ENCODE measurements at regions of chr9 and their contacts with region 1.

Region 1: GRCh38 chr9:120936011-120936763 is 9.6 kb upstream of the TRAF1 start:
- DNase-seq: peak; percentile 86 to 93
- ATAC-seq: peak; percentile 75 to 87 (median 78)
- H3K4me3 ChIP-seq: no peak overlapping the region
- H3K4me3 Mint-ChIP-seq: peak overlapping the region; percentile 64
- H3K27ac ChIP-seq: peak overlapping the region; percentile 7
- H3K27ac Mint-ChIP-seq: peak overlapping the region; percentile 68 to 72
- H3K4me1 ChIP-seq: peaks cover 49% of the 10 kb centered on the region
- H3K4me1 Mint-ChIP-seq: peaks cover 33 to 44% of the 10 kb centered on the region in 2 donors
- H3K27me3 ChIP-seq: no peaks in the 10 kb centered on the region
- H3K27me3 Mint-ChIP-seq: peaks cover 0 to 5% of the 10 kb centered on the region in 2 donors
- CTCF ChIP-seq: peak; percentile 96

Region 2: GRCh38 chr9:120619751-120620655 is 316.2 kb before region 1 on chr9:
- intact Hi-C with region 1: loop called (anchors 1 kb)
- DNase-seq: peak; percentile 34 to 80
- ATAC-seq: peak; percentile 88 to 95 (median 93)
- H3K4me3 ChIP-seq: no peak overlapping the region
- H3K4me3 Mint-ChIP-seq: no peak overlapping the region
- H3K27ac ChIP-seq: no peak overlapping the region
- H3K27ac Mint-ChIP-seq: peak overlapping the region in 1 of 2 donors; percentile 5
- H3K4me1 ChIP-seq: no peaks in the 10 kb centered on the region
- H3K4me1 Mint-ChIP-seq: peaks cover 8 to 12% of the 10 kb centered on the region in 2 donors
- H3K27me3 ChIP-seq: no peaks in the 10 kb centered on the region
- H3K27me3 Mint-ChIP-seq: no peaks in the 10 kb centered on the region
- CTCF ChIP-seq: peak; percentile 88

Region 3: DNA sequence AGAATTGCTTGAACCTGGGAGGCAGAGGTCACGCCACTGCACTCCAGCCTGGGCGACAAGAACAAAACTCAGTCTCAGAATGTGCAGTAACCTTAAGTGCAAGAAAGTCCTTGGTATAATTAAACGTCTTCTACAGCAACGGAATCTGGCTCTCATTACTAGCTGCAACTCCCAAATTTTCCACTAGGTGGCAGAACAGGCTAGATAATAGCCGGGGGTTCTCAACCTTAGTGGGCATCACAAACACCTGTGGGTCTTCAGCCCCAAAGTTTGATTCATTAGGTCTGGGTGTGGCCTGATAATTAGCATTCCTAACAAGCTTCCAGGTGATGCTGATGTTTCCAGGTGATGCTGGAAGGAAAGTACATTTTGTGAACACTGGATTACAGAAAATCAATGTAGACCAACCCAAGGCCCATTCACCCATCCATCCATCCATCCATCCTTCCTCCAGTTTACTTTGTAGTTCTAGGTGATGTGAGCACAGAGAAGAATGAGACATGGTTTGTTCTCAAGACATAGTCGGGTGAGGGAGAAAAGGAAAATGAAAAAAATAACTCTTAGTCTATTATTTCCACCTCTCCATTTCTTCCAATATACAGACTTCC is 180.3 kb before region 1 on chr9:
- intact Hi-C with region 1: loop called (anchors 1 kb)
- DNase-seq: peak; percentile 51 to 85
- ATAC-seq: peak; percentile 69 to 85 (median 74)
- H3K4me3 ChIP-seq: no peak overlapping the region
- H3K4me3 Mint-ChIP-seq: no peak overlapping the region
- H3K27ac ChIP-seq: no peak overlapping the region
- H3K27ac Mint-ChIP-seq: peak overlapping the region in 1 of 2 donors; percentile 36
- H3K4me1 ChIP-seq: no peaks in the 10 kb centered on the region
- H3K4me1 Mint-ChIP-seq: peaks cover 0 to 5% of the 10 kb centered on the region in 2 donors
- H3K27me3 ChIP-seq: no peaks in the 10 kb centered on the region
- H3K27me3 Mint-ChIP-seq: no peaks in the 10 kb centered on the region
- CTCF ChIP-seq: peak; percentile 93

Region 4: GRCh38 chr9:120792898-120793765 is 143.1 kb before region 1 on chr9 and contains the start of gene FBXW2:
- intact Hi-C with region 1: loop called (anchors 5 kb)
- DNase-seq: peak; percentile 75 to 92
- ATAC-seq: peak; percentile 85 to 92 (median 87)
- H3K4me3 ChIP-seq: peak within 1 kb of the TSS; percentile 76
- H3K4me3 Mint-ChIP-seq: peak within 1 kb of the TSS; percentile 94
- H3K27ac ChIP-seq: peak within 1 kb of the TSS; percentile 78
- H3K27ac Mint-ChIP-seq: peak within 1 kb of the TSS; percentile 87 to 96
- H3K4me1 ChIP-seq: peaks cover 15% of the 10 kb centered on the region
- H3K4me1 Mint-ChIP-seq: peaks cover 51 to 52% of the 10 kb centered on the region in 2 donors
- H3K27me3 ChIP-seq: no peaks in the 10 kb centered on the region
- H3K27me3 Mint-ChIP-seq: no peaks in the 10 kb centered on the region
- CTCF ChIP-seq: no peak
- total RNA-seq, gene FBXW2: 88.3 to 122 (median 92.6) TPM

Region 5: GRCh38 chr9:120842690-120843499 is 93.3 kb before region 1 on chr9 and contains the start of gene PSMD5:
- intact Hi-C with region 1: no loop called
- DNase-seq: peak; percentile 92 to 98
- ATAC-seq: peak; percentile 95 to 99 (median 97)
- H3K4me3 ChIP-seq: peak within 1 kb of the TSS; percentile 85
- H3K4me3 Mint-ChIP-seq: peak within 1 kb of the TSS; percentile 99
- H3K27ac ChIP-seq: peak within 1 kb of the TSS; percentile 92
- H3K27ac Mint-ChIP-seq: peak within 1 kb of the TSS; percentile 98 to 99
- H3K4me1 ChIP-seq: peaks cover 28% of the 10 kb centered on the region
- H3K4me1 Mint-ChIP-seq: peaks cover 57 to 58% of the 10 kb centered on the region in 2 donors
- H3K27me3 ChIP-seq: no peaks in the 10 kb centered on the region
- H3K27me3 Mint-ChIP-seq: no peaks in the 10 kb centered on the region
- CTCF ChIP-seq: no peak
- total RNA-seq, gene PSMD5: 24.6 to 41.2 (median 37.1) TPM

Region 6: DNA sequence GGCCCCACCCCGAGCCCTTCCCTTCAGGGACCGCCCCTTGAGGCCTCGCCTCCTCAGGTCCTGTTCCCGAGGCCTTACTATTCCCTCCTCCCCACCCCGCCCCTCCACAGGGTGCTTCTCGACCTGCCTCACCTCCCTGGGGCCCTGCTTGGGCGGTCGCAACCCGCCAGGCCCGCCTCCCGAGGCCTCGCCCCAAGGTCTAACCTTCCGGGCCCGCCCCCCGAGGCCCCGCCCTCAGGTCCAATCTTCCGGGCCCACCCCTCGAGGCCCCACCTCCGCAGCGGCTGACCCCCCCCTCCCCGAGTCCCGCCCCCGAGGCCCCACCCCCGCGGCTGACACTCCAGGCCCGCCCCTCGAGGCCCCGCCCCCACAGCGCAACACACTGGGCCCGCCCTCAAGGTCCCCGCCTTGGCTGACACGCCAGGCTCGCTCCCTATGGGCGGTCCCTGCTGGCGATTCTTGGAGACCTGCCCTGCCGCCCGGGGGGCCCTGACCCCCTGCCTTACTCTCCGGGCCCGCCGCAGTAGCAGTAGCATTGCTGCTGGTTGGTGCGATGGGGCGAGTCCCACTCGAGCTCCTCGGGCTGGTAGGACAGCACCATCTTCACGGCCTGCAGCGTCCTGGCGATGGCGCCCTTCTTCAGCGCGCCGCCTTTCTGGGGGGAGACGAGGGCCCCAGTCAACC is 67.4 kb before region 1 on chr9:
- intact Hi-C with region 1: loop called (anchors 1 kb)
- DNase-seq: peak; percentile 93 to 96
- ATAC-seq: peak; percentile 81 to 93 (median 83)
- H3K4me3 ChIP-seq: peak overlapping the region; percentile 68
- H3K4me3 Mint-ChIP-seq: peak overlapping the region; percentile 94
- H3K27ac ChIP-seq: peak overlapping the region; percentile 78
- H3K27ac Mint-ChIP-seq: peak overlapping the region; percentile 92 to 94
- H3K4me1 ChIP-seq: peaks cover 16% of the 10 kb centered on the region
- H3K4me1 Mint-ChIP-seq: peaks cover 4 to 22% of the 10 kb centered on the region in 2 donors
- H3K27me3 ChIP-seq: no peaks in the 10 kb centered on the region
- H3K27me3 Mint-ChIP-seq: no peaks in the 10 kb centered on the region
- CTCF ChIP-seq: peak; percentile 57

Region 7: GRCh38 chr9:120877276-120878034 is 58.7 kb before region 1 on chr9:
- intact Hi-C with region 1: loop called (anchors 1 kb)
- DNase-seq: peak; percentile 59 to 82
- ATAC-seq: peak; percentile 59 to 72 (median 71)
- H3K4me3 ChIP-seq: peak overlapping the region; percentile 81
- H3K4me3 Mint-ChIP-seq: peak overlapping the region; percentile 94
- H3K27ac ChIP-seq: peak overlapping the region; percentile 83
- H3K27ac Mint-ChIP-seq: peak overlapping the region; percentile 67 to 90
- H3K4me1 ChIP-seq: peaks cover 33% of the 10 kb centered on the region
- H3K4me1 Mint-ChIP-seq: peaks cover 29 to 37% of the 10 kb centered on the region in 2 donors
- H3K27me3 ChIP-seq: no peaks in the 10 kb centered on the region
- H3K27me3 Mint-ChIP-seq: no peaks in the 10 kb centered on the region
- CTCF ChIP-seq: no peak

Region 8: DNA sequence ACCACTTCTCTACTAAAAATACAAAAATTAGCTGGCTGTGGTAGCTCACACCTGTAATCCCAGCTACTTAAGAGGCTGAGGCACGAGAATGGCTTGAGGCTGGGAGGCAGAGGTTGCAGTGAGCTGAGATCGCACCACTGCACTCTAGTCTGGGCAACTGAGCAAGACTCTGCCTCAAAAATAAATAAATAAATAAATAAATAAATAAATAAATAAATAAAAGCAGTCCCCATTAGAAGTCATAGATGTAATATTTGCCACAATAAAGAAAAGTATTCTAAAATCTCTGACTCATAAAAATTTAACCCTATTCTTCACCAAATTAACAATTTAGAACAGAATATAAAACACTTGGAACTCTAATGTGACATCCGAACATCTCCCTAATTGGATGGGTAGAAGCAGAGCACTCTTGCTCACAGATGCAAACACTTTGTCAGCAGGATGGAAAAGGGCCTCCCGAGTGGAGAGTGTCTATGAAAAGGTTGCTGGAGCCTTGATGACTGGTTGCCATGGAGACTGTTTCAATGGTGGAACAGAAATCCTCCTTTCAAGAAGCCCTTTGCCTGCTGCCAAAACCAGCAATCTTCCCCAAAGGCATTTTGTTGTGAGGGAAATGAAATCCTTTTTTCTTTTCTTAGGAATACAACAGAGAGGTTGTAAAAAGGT is 29.3 kb after region 1 on chr9:
- intact Hi-C with region 1: no loop called
- DNase-seq: no peak
- ATAC-seq: no peak
- H3K4me3 ChIP-seq: no peak overlapping the region
- H3K4me3 Mint-ChIP-seq: no peak overlapping the region
- H3K27ac ChIP-seq: no peak overlapping the region
- H3K27ac Mint-ChIP-seq: no peak overlapping the region
- H3K4me1 ChIP-seq: no peaks in the 10 kb centered on the region
- H3K4me1 Mint-ChIP-seq: no peaks in the 10 kb centered on the region
- H3K27me3 ChIP-seq: no peaks in the 10 kb centered on the region
- H3K27me3 Mint-ChIP-seq: no peaks in the 10 kb centered on the region
- CTCF ChIP-seq: no peak